ENCODE measurements at regions of chr13 and their contacts with region 1.

Region 1: DNA sequence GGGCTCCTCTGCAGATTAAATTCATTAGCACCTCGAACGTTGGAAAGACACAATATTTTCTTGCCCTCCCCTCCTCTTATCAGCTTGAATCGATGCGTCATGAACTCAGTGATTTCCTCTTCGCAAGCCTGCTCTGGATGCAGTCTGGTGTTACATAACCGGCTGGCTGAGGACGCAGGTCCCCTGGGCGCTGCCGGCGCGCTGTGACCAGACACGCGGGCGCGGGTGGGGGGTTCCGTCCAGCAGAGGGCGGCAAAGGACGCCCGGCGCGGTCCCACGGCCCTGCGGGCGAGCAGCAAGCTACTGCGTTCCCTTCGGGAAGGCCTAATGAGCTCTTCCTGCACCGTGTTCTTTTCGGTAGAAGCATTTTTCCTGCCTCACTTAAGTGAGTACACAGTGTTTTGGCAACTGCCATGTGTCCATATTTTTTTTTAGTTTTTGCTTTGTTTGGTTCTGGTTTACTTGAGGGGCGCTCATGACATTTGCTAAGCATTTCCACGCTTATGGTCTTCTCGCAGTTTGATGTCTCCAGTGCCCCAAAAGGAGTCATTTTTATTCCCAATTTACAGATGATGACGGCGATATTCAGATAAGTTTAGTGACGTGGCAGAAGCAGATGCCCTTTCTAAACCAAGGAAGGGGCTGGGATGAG is 112.2 kb upstream of the MBNL2 start:
- DNase-seq: peak; percentile 78 to 99 (median 94)
- ATAC-seq: peak; percentile 98 to 100 (median 99)
- H3K4me3 ChIP-seq: peak overlapping the region in 2 of 4 donors; percentile 8 to 14
- H3K27ac ChIP-seq: no peak overlapping the region
- H3K4me1 ChIP-seq: no peaks in the 10 kb centered on the region
- H3K27me3 ChIP-seq: no peaks in the 10 kb centered on the region
- CTCF ChIP-seq: peak; percentile 93 to 98 (median 97)

Region 2: GRCh38 chr13:97212601-97213040 is 102.7 kb after region 1 on chr13:
- intact Hi-C with region 1: loop called in 2 of 3 experiments (anchors 5 to 10 kb)
- DNase-seq: peak in 1 of 6 donors; percentile 39
- ATAC-seq: peak; percentile 48 to 92 (median 87)
- H3K4me3 ChIP-seq: no peak overlapping the region
- H3K27ac ChIP-seq: no peak overlapping the region
- H3K4me1 ChIP-seq: no peaks in the 10 kb centered on the region
- H3K27me3 ChIP-seq: no peaks in the 10 kb centered on the region
- CTCF ChIP-seq: peak; percentile 5 to 34 (median 23)